Right cardiac atrium (tissue), 5 donors: ENCODE measurements at regions of chr10 and their contacts with region 1.

Region 1: GRCh38 chr10:132223156-132223590 is 36.4 kb downstream of the DPYSL4 start:
- DNase-seq: peak; percentile 81 to 92 (median 90)
- ATAC-seq: peak; percentile 92
- H3K4me3 ChIP-seq: no peak overlapping the region
- H3K27ac ChIP-seq: no peak overlapping the region
- H3K4me1 ChIP-seq: no peaks in the 10 kb centered on the region
- H3K27me3 ChIP-seq: no peaks in the 10 kb centered on the region

Region 2: DNA sequence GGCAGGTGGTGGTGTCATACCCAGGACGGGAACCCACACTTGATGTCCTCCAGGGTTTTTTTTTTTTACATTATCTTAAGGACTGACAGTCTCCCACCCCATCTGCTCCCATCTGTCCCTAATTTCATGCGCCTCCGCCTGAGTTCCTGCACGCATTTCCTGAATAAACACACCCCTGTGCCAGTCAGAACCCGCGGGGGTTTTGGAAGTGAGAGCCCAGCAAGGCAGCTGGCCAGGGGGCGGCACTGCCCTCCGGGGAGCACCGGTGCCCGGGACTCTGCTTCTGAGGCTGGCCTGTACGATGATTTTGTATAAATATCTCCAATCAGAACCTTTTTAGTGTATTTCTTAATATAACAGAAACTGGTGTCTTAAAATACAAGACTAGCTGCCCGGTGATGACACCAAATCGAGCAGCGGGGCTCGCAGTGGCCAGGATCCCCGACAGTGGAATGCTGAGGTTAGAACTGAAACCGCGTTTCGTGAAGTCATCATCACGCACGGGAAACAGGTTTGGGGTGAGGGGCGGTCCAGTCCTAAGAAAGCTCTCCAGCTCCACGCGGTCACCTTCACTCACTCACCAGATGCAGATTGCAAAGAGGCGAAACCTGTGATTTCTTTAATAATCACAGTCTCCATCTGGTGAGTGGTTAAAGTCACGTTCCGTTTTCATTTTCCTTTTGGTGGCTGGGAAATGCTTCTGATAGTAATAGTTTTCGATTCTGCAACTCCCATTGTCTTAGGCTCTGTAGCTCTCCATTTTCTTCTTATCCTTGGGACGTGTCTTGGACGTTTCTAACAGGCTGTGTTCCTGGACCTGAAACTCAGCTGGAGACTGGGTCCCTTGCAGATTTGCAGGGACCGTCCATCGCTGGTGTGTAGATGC is 261.2 kb before region 1 on chr10:
- intact Hi-C with region 1: no loop called
- DNase-seq: no peak
- ATAC-seq: no peak
- H3K4me3 ChIP-seq: no peak overlapping the region
- H3K27ac ChIP-seq: no peak overlapping the region
- H3K4me1 ChIP-seq: no peaks in the 10 kb centered on the region
- H3K27me3 ChIP-seq: no peaks in the 10 kb centered on the region

Region 3: GRCh38 chr10:132175907-132176581 is 47.1 kb before region 1 on chr10:
- intact Hi-C with region 1: no loop called
- DNase-seq: peak in 1 of 3 donors; percentile 60
- ATAC-seq: peak in 1 of 2 donors; percentile 67
- H3K4me3 ChIP-seq: no peak overlapping the region
- H3K27ac ChIP-seq: no peak overlapping the region
- H3K4me1 ChIP-seq: peaks cover 7% of the 10 kb centered on the region
- H3K27me3 ChIP-seq: no peaks in the 10 kb centered on the region

Region 4: GRCh38 chr10:132354356-132355094 is 131.4 kb after region 1 on chr10:
- intact Hi-C with region 1: loop called (anchors 2 to 5 kb)
- DNase-seq: peak in 1 of 3 donors; percentile 12
- ATAC-seq: peak; percentile 12 to 23
- H3K4me3 ChIP-seq: no peak overlapping the region
- H3K27ac ChIP-seq: no peak overlapping the region
- H3K4me1 ChIP-seq: no peaks in the 10 kb centered on the region
- H3K27me3 ChIP-seq: no peaks in the 10 kb centered on the region

Region 5: DNA sequence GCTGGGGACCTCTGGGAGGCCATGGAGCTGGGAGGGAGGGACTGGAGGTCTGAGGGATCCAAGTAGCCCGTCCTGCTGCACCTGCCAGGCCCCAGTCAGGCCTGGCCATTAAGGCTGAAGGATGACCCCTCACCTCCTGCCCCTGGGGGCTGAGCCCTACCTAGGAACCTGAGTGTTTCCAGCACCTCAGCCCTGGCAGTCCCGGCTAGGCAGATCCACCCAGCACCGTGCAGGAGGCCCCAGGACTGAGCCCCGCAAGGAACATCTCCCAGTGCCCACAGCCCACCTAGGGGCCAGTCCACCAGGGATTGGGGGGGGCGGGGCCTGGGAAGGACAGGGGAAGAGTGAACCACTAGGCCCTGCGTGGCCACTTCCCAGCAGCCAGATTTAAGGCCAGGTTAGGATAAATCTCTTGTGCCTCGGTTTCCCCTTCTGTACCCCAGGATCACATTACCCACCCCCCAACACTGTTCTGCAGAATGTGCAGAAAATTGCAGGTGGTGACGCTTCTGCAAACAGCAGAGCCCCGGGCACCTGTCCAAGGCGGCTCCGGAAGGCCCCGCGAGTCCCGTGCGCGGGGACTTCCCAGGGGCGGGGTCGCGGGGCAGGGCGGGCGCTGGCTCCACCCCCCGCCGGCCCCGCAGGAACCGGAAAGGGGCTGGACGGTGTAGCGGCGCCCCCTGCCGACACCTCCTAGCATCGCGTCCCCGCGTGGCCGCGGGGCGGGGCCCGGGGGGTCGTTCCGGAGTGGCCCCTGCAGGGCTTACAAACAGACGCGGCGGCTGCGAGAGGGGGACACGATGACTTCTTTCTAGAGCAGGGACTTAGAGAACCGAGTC is 229.7 kb after region 1 on chr10:
- intact Hi-C with region 1: loop called in 3 of 4 experiments (anchors 2 to 5 kb)
- DNase-seq: peak; percentile 83 to 94 (median 94)
- ATAC-seq: peak; percentile 77 to 79
- H3K4me3 ChIP-seq: no peak overlapping the region
- H3K27ac ChIP-seq: no peak overlapping the region
- H3K4me1 ChIP-seq: no peaks in the 10 kb centered on the region
- H3K27me3 ChIP-seq: no peaks in the 10 kb centered on the region

Region 6: GRCh38 chr10:132506711-132507408 is 283.7 kb after region 1 on chr10:
- intact Hi-C with region 1: no loop called
- DNase-seq: peak in 2 of 3 donors; percentile 37 to 73
- ATAC-seq: peak; percentile 22 to 45
- H3K4me3 ChIP-seq: no peak overlapping the region
- H3K27ac ChIP-seq: peak overlapping the region; percentile 31
- H3K4me1 ChIP-seq: peaks cover 5% of the 10 kb centered on the region
- H3K27me3 ChIP-seq: no peaks in the 10 kb centered on the region